Activated CD4-positive, alpha-beta memory T cell treated with anti-CD3 and anti-CD28 coated beads, Interleukin-2, amount 10 ng/mL, durations not matched to agents 7 days and 5 days (primary cell): ENCODE measurements at regions of chr5 and their contacts with region 1.

Region 1: DNA sequence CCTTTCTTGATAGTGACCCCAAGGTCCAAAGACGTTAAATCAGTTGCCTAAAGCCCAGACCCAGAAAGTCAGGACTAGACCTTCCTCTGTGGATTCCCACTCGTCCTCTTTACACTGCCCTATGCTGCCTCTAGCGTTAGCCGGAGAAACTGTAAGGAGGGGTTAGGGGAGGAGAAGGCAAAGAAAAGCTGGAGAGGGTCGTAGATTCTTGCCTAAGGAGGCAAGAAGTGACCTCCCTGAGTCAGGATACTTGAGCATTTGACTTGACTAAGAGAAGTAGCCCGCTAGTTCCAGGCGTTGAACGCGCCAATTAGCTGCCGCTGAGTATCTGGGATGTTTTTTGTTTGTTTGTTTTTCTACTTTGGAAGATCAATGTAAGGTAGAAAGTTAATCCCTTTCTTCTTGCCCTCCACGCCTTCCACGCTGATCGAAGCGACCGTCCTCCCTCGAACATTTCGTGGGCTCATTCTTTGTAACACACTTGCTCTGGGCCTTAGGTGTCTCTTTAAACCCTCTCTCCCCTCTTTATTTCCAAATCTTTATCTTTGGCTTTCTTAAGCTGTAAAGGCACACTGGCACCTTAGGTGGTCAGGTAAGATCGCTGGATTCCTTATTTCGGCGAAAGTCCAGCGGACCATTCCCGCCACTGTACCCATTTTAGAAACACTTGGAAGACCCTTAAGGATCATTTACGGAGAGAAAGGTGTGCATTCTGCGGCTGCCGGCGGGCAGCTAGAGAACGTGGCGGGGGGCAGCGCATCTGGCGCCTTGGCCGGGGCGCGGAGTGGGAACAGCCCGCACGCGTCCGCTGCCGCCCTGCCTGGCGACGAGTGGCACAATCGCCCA is 5.1 kb upstream of the RGMB start:
- DNase-seq: peak; percentile 30
- H3K4me3 Mint-ChIP-seq: peak overlapping the region; percentile 57
- H3K27ac Mint-ChIP-seq: no peak overlapping the region
- H3K4me1 Mint-ChIP-seq: peaks cover 43% of the 10 kb centered on the region
- H3K27me3 Mint-ChIP-seq: peaks cover 61% of the 10 kb centered on the region

Region 2: DNA sequence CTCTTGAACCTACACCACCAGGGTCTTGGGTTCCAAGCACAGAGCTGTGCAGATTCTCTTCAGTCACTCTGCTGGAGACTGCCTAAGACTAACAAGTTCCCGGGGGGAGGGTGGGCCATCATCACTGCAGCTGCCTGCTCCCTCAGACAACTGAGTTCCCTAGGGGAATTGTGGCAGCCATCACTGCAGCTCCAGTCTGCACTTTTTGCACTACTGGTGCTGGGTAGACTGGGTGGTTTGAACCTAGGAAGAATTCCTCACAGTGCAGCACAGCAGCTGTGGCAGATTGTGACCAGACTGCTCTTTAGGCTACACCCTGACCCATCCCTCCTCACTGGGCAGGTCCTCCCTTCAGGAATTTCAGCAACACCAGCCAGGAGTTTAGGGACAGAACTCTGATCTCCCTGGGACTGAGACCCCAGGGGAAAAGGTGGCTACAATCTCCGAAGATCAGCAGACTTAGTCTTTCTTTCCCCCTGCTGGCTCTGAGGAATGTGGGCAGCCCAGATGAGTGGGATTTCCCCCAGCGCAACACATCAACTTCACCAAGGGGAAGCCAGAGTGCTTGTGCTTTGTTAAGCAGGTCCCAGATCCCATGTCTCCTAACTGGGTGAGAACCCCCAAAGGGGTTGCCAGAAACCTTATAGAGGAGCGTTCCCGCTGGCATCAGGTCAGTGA is 25.8 kb before region 1 on chr5:
- CTCF ChIA-PET with region 1: interaction called, 16 read pairs
- POLR2A ChIA-PET with region 1: no interaction called
- DNase-seq: no peak
- H3K4me3 Mint-ChIP-seq: no peak overlapping the region
- H3K27ac Mint-ChIP-seq: no peak overlapping the region
- H3K4me1 Mint-ChIP-seq: no peaks in the 10 kb centered on the region
- H3K27me3 Mint-ChIP-seq: peaks cover 19% of the 10 kb centered on the region

Region 3: DNA sequence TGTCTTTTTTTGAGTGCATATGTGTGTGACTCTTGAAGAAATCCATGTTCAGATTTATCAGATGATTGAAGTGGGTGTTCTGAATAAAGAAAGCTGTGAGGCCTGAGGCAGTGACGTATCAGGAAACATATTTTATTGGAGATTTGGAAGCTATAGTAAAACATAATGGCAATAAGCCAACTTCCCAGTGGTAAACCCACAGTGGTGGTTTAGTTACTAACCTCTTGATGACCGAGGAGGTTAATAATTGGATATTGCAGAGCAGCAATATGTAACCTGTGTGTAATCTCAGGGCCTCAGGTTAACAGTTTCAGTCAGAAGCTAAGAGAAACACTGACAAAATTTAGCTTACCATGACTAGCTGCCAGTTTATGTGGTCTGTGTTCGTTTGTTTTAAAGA is 12.0 kb after region 1 on chr5:
- CTCF ChIA-PET with region 1: interaction called, 32 read pairs
- POLR2A ChIA-PET with region 1: interaction called, 6 read pairs
- DNase-seq: no peak
- H3K4me3 Mint-ChIP-seq: no peak overlapping the region
- H3K27ac Mint-ChIP-seq: no peak overlapping the region
- H3K4me1 Mint-ChIP-seq: peaks cover 2% of the 10 kb centered on the region
- H3K27me3 Mint-ChIP-seq: peaks cover 11% of the 10 kb centered on the region

Region 4: DNA sequence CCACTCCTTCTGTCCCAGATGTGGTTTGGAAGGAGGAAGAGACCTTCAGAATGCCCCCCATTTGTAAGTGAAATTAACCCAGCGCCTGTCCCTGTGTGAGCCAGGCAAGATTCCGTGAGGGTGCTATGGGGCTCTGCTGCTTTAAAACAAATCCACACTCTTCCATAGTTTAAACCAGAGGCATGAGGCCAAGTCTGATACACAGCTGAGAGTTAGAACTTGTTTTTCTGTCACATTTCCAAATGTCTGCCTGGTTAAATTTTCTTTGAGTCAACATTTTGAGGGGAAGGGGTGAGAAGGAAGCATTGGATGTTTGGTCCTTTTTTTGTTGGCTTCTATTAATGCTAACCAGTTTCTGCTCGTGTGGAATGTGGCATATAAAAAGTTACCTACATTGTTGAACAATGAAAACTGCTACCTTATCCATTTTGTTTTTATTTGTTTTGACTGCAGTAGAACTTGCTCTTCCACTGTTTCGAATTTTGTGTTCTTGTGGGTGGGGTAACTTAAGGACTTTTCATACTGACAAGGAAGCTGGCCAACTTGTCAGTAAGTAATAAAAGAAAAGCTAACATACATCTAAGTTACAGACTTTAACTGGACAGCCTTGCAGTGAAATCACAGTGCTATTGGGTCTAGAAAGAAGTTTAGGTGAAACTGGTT is 17.9 kb after region 1 on chr5:
- CTCF ChIA-PET with region 1: interaction called, 23 read pairs
- POLR2A ChIA-PET with region 1: interaction called, 6 read pairs
- DNase-seq: no peak
- H3K4me3 Mint-ChIP-seq: no peak overlapping the region
- H3K27ac Mint-ChIP-seq: no peak overlapping the region
- H3K4me1 Mint-ChIP-seq: no peaks in the 10 kb centered on the region
- H3K27me3 Mint-ChIP-seq: no peaks in the 10 kb centered on the region

Region 5: GRCh38 chr5:98796197-98796972 is 28.0 kb after region 1 on chr5:
- CTCF ChIA-PET with region 1: interaction called, 29 read pairs
- POLR2A ChIA-PET with region 1: no interaction called
- DNase-seq: peak; percentile 37
- H3K4me3 Mint-ChIP-seq: no peak overlapping the region
- H3K27ac Mint-ChIP-seq: no peak overlapping the region
- H3K4me1 Mint-ChIP-seq: no peaks in the 10 kb centered on the region
- H3K27me3 Mint-ChIP-seq: no peaks in the 10 kb centered on the region